ENCODE measurements at regions of chr15 and their contacts with region 1.

Region 1: GRCh38 chr15:94607176-94607654 is 375.9 kb downstream of the MCTP2 start:
- DNase-seq: peak; percentile 55
- ATAC-seq: peak; percentile 23 to 78

Region 2: GRCh38 chr15:94666561-94666960 is 59.3 kb after region 1 on chr15:
- intact Hi-C with region 1: loop called in 1 of 2 experiments (anchors 10 kb)
- DNase-seq: no peak
- ATAC-seq: no peak